ENCODE measurements at regions of chr9 and their contacts with region 1.

Region 1: DNA sequence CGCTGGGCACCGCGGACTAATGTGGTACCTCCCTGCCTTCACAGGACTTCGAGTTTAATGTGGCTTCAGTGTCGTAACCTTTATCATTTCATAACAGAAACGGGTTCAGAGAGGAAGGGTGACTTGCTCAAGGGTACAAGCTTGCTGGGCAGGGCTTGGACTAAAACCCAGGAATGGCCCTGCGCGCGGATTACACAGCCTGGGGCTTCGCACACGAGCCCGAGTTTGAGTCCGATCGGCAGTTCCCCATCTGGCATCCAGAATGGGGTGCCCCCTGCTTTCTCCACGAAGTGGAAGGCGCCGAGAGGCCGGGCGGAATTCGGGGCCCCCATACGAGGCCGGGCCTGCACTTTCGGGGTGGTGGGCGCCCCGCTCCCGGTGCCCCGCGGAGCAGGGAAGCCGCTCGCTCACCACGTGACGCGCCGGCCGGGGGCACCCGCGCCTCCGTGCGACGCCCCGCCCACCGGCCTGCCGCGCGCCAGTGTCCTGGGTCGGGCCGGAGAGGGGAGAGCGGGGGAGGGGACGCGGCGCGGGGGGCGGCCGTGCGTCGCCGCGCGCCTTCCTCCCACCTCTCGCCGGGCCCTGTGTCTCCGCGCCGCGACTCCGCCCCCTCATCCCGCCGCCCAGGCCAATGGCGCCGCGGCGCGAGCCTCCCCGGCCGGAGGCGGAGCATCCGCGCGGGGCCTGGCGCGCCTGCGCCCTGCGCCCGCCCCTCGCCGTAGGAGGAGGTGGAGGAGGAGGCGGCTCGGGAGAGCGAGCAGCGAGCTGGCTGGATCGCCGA is at the start of gene SET:
- DNase-seq: peak; percentile 78 to 94 (median 86)
- H3K4me3 ChIP-seq: peak within 1 kb of the TSS; percentile 64 to 97 (median 83)
- H3K27ac ChIP-seq: peak within 1 kb of the TSS; percentile 76 to 99 (median 96)
- H3K27me3 ChIP-seq: peaks cover 0 to 10% (median 0%) of the 10 kb centered on the region in 45 donors
- CTCF ChIP-seq: peak in 12 of 56 donors; percentile 1 to 33 (median 11)
- total RNA-seq, gene SET: 147 to 261 (median 187) TPM

Region 2: DNA sequence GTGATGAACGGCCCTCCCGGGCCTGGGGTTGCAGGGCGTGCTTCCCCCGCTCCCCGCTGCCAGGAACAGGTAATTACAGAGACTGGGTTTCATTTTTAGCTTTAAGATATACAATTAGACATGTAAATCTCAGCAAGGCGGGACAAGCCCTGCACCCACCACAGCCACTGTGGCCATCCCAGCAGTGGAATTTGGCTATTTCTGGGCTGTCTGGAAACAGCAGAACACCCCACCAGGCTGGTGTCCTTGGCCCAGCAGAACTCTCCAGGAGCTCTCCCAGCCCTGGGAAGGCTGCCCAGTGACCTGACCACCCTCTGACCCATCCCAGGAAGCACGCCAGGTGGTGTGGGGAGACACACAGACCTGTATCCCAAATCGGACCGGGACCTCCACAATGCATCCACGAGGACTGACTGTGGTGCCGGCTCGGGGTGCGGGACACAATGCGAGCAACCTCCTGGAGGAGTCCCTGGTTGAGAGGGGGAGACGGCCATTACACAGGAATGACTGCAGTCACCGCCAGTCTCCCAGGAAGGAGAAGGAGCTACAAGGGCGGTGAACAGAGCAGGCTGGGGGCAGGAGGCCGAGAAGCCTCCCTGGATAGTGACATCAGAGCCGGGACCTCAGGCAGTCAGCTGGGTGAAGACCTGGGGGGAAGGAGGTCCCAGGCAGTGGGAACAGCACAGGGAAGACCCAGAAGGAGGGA is 725.2 kb before region 1 on chr9:
- intact Hi-C with region 1: no loop called
- DNase-seq: peak in 3 of 10 donors; percentile 39 to 45 (median 45)
- H3K4me3 ChIP-seq: peak overlapping the region in 6 of 59 donors; percentile 3 to 32 (median 10)
- H3K27ac ChIP-seq: peak overlapping the region; percentile 75 to 100 (median 97)
- H3K27me3 ChIP-seq: no peaks in the 10 kb centered on the region
- CTCF ChIP-seq: peak in 1 of 56 donors; percentile 9

Region 3: DNA sequence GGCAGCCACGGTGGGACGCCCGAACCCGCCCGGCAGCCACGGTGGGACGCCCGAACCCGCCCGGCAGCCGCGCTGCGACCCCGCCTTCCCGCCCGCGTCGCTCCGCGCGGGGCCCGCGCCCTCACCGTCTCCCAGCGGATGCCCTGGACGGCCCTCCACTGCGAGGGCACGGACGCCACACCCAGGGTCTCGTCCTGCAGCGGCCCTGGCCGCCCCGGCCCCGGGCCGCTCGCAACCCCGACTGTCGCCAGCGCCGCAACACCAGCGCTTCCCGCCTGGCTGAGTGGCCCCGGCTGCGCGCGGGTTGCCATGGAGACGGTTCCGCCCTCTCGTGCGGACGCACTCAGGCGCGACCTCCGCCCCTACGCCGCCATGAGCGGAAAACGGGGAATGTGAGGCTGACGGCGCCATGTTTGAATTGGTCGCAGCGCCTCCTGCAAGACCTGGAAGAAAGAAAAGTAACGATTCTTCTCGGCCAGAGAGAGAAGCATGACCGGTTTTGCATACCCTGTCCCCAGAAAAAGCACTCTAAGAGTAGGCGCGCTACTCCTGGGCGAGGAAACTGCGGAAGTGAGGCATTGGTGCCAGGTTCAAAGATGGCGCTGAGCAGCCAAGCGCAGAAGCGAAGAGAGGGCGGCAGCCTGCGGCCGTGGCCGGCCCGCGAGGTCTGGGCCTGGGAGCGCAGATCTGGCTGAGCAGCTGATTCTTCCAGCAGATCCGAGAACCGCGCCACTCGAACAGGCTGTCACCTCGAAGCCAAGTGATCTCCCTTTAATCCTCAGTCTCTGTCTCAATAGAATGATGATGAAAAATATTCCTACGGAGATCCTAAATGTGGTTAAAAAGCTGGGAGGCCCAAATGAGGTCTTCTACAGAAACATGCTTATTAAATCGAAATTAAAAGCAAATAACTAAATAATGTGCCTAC is 32.0 kb before region 1 on chr9 and contains the start of gene DYNC2I2:
- intact Hi-C with region 1: loop called (anchors 1 to 2 kb)
- DNase-seq: peak; percentile 90 to 97 (median 95)
- H3K4me3 ChIP-seq: peak within 1 kb of the TSS; percentile 54 to 93 (median 77)
- H3K27ac ChIP-seq: peak within 1 kb of the TSS; percentile 95 to 100 (median 100)
- H3K27me3 ChIP-seq: no peaks in the 10 kb centered on the region
- CTCF ChIP-seq: peak in 38 of 56 donors; percentile 7 to 65 (median 32)
- total RNA-seq, gene DYNC2I2: 9.3 to 27.2 (median 15.5) TPM

Region 4: GRCh38 chr9:128723866-128724743 is 35.4 kb after region 1 on chr9 and contains the start of gene ZDHHC12:
- intact Hi-C with region 1: loop called in 1 of 2 experiments (anchors 2 kb)
- DNase-seq: peak; percentile 79 to 98 (median 92)
- H3K4me3 ChIP-seq: peak within 1 kb of the TSS; percentile 51 to 95 (median 73)
- H3K27ac ChIP-seq: peak within 1 kb of the TSS in 58 of 59 donors; percentile 3 to 90 (median 78)
- H3K27me3 ChIP-seq: no peaks in the 10 kb centered on the region
- CTCF ChIP-seq: peak in 10 of 56 donors; percentile 1 to 33 (median 16)
- total RNA-seq, gene ZDHHC12: 1.9 to 8.9 (median 4.8) TPM

Measured in dorsolateral prefrontal cortex (tissue), 120 donors.